Naive thymus-derived CD4-positive, alpha-beta T cell (primary cell): ENCODE measurements at regions of chr6 and their contacts with region 1.

Region 1: GRCh38 chr6:1396952-1397868 is 7.8 kb downstream of the FOXF2 start:
- DNase-seq: peak; percentile 39 to 75 (median 67)
- ATAC-seq: peak; percentile 78
- H3K4me3 ChIP-seq: no peak overlapping the region
- H3K4me3 Mint-ChIP-seq: peak overlapping the region in 5 of 10 donors; percentile 4 to 57 (median 41)
- H3K27ac ChIP-seq: no peak overlapping the region
- H3K27ac Mint-ChIP-seq: peak overlapping the region in 1 of 9 donors; percentile 24
- H3K4me1 ChIP-seq: no peaks in the 10 kb centered on the region
- H3K4me1 Mint-ChIP-seq: peaks cover 0 to 16% (median 6%) of the 10 kb centered on the region in 7 donors
- H3K27me3 ChIP-seq: peaks cover 0 to 17% of the 10 kb centered on the region in 2 donors
- H3K27me3 Mint-ChIP-seq: peaks cover 54 to 67% (median 59%) of the 10 kb centered on the region in 5 donors

Region 2: DNA sequence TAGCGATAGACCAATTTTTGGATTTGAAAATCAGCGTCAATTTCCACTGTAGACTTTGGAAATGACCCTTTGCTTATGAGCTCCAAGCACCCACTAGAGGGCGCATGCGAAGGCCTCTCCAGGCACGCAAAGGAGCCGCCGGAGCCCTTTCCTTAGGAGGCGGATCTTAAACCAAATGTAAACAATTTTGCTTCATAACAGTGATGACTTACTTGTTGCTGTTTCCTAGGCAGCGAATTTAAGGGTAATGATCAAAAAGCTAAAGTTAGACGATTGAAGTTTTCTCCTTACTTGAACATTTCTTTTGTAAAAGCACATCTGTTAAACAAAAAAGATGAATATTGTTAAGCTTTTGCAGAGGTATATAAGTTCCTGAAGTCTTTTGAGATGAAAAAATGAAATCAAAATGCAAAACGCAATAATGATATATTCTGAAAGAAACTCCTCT is 675.1 kb before region 1 on chr6:
- CTCF ChIA-PET with region 1: no interaction called
- POLR2A ChIA-PET with region 1: no interaction called
- intact Hi-C with region 1: loop called in 1 of 2 experiments (anchors 10 kb)
- DNase-seq: peak; percentile 37 to 73 (median 61)
- ATAC-seq: peak; percentile 89
- H3K4me3 ChIP-seq: no peak overlapping the region
- H3K4me3 Mint-ChIP-seq: peak overlapping the region in 1 of 10 donors; percentile 9
- H3K27ac ChIP-seq: no peak overlapping the region
- H3K27ac Mint-ChIP-seq: peak overlapping the region in 1 of 9 donors; percentile 25
- H3K4me1 ChIP-seq: no peaks in the 10 kb centered on the region
- H3K4me1 Mint-ChIP-seq: peaks cover 0 to 11% (median 6%) of the 10 kb centered on the region in 7 donors
- H3K27me3 ChIP-seq: no peaks in the 10 kb centered on the region
- H3K27me3 Mint-ChIP-seq: peaks cover 0 to 29% (median 16%) of the 10 kb centered on the region in 5 donors

Region 3: GRCh38 chr6:1311400-1312202 is 85.6 kb before region 1 on chr6 and contains the start of gene FOXQ1:
- CTCF ChIA-PET with region 1: no interaction called
- POLR2A ChIA-PET with region 1: no interaction called
- intact Hi-C with region 1: loop called in 1 of 2 experiments (anchors 2 kb)
- DNase-seq: peak in 1 of 9 donors; percentile 28
- ATAC-seq: peak; percentile 16
- H3K4me3 ChIP-seq: no peak within 1 kb of the TSS
- H3K4me3 Mint-ChIP-seq: peak within 1 kb of the TSS; percentile 25 to 84 (median 73)
- H3K27ac ChIP-seq: no peak within 1 kb of the TSS
- H3K27ac Mint-ChIP-seq: peak within 1 kb of the TSS in 1 of 9 donors; percentile 78
- H3K4me1 ChIP-seq: no peaks in the 10 kb centered on the region
- H3K4me1 Mint-ChIP-seq: peaks cover 21 to 40% (median 32%) of the 10 kb centered on the region in 7 donors
- H3K27me3 ChIP-seq: peaks cover 7 to 8% of the 10 kb centered on the region in 2 donors
- H3K27me3 Mint-ChIP-seq: peaks cover 65 to 79% (median 72%) of the 10 kb centered on the region in 5 donors
- total RNA-seq, gene FOXQ1: not detected

Region 4: DNA sequence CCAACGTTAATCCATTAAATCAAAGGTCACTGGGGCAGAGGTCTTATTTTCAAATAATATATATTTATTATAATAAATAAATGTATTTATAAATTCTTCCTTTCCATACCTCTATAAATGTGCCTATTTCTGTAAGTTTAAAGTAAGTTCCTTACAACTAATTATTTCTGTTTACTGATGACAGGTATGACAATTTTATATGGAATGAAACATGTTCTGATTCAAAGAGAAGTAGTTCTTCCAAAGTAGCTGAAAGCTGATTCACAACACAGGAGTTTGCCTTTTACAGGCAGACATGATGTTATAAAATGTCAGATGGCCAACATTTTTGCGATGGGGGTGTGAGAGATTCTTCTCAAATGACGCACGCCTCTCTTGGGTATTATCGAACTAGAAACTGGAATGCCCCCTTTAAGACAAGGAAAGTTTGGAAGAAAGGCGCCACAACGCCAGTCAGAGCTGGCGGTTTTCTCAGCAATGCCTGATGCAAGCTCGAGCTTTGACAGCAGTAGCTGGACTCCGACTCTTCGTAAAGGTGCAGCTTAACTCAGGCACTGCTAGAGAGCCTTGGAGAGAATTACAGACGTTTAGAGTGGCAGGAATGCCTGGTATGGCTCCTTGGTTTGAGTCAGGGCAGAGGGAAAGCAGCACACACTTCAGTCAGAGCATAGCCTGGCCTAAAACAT is 304.6 kb after region 1 on chr6:
- CTCF ChIA-PET with region 1: no interaction called
- POLR2A ChIA-PET with region 1: no interaction called
- intact Hi-C with region 1: no loop called
- DNase-seq: no peak
- ATAC-seq: no peak
- H3K4me3 ChIP-seq: no peak overlapping the region
- H3K4me3 Mint-ChIP-seq: no peak overlapping the region
- H3K27ac ChIP-seq: no peak overlapping the region
- H3K27ac Mint-ChIP-seq: no peak overlapping the region
- H3K4me1 ChIP-seq: no peaks in the 10 kb centered on the region
- H3K4me1 Mint-ChIP-seq: peaks cover 0 to 5% (median 0%) of the 10 kb centered on the region in 7 donors
- H3K27me3 ChIP-seq: no peaks in the 10 kb centered on the region
- H3K27me3 Mint-ChIP-seq: no peaks in the 10 kb centered on the region